Endothelial cell of umbilical vein (primary cell): ENCODE measurements at regions of chr19 and their contacts with region 1.

Region 1: GRCh38 chr19:10259162-10259905 is 7.3 kb downstream of the MRPL4 start:
- DNase-seq: peak; percentile 79
- H3K4me3 ChIP-seq: no peak overlapping the region
- H3K27ac ChIP-seq: no peak overlapping the region
- H3K4me1 ChIP-seq: no peaks in the 10 kb centered on the region
- H3K27me3 ChIP-seq: no peaks in the 10 kb centered on the region
- CTCF ChIP-seq: peak; percentile 63 to 80
- POLR2A ChIP-seq: no peak

Region 2: DNA sequence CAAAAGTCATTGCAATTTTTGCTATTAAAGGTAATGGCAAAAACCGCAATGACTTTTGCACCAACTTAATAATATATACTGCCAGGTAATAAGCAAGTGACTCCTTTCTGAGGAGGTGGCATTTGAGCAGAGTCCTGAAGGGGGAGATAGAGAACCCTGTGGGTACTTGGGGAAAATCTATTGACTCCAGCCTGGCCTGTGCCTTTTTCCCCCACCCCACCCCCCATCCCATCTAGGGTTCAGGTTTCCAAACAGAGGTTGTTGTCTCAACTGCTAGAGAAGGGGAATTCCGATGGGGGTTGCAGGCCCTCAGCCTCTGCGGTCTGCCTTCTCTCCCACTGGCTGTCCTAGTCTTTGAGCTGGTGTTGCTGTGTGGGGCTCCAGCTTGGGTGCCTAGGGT is 39.7 kb before region 1 on chr19:
- CTCF ChIA-PET with region 1: no interaction called
- POLR2A ChIA-PET with region 1: no interaction called
- dilution Hi-C with region 1: no loop called
- intact Hi-C with region 1: no loop called
- DNase-seq: no peak
- H3K4me3 ChIP-seq: no peak overlapping the region
- H3K27ac ChIP-seq: no peak overlapping the region
- H3K4me1 ChIP-seq: no peaks in the 10 kb centered on the region
- H3K27me3 ChIP-seq: no peaks in the 10 kb centered on the region
- CTCF ChIP-seq: peak in 1 of 2 donors; percentile 26
- POLR2A ChIP-seq: no peak

Region 3: GRCh38 chr19:10269333-10270179 is 10.2 kb after region 1 on chr19:
- CTCF ChIA-PET with region 1: interaction called, 127 read pairs
- POLR2A ChIA-PET with region 1: no interaction called
- dilution Hi-C with region 1: no loop called
- intact Hi-C with region 1: loop called (anchors 1 kb)
- DNase-seq: peak; percentile 90
- H3K4me3 ChIP-seq: no peak overlapping the region
- H3K27ac ChIP-seq: peak overlapping the region; percentile 73
- H3K4me1 ChIP-seq: peaks cover 36% of the 10 kb centered on the region
- H3K27me3 ChIP-seq: no peaks in the 10 kb centered on the region
- CTCF ChIP-seq: peak; percentile 88 to 93
- POLR2A ChIP-seq: no peak

Region 4: DNA sequence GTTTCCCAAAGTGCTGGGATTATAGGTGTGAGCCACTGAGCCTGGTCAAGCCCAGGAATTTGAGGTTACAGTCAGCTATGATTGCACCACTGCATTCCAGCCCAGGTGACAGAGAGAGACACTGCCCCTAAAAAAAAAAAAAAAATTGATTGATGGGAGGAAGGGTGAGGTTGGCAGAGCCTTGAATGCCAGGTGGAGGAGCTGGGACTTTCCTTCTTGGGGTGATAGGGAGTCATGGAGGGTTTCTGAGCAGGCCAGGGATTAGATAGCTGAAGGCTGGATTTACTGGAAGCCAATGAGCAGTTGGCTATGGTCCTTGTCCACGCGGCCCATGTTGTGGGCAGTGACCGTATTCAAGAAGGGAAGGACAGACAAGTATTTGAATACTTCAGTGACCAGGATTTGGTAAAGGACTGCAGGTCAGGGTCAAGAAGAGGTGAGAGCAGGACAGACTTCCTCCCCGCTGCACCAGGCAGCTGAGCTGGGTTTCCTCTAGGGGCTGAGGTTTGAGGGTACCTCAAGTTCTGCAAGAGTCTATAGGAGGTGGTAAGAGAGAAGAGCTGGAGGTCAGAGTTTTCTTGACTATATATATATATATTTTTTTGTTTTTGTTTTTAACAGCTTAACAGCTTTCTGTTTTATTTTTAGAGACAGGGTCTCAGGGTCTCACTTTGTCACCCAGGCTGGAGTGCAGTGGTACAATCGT is 20.6 kb after region 1 on chr19:
- CTCF ChIA-PET with region 1: interaction called, 14 read pairs
- POLR2A ChIA-PET with region 1: no interaction called
- dilution Hi-C with region 1: no loop called
- intact Hi-C with region 1: no loop called
- DNase-seq: no peak
- H3K4me3 ChIP-seq: no peak overlapping the region
- H3K27ac ChIP-seq: no peak overlapping the region
- H3K4me1 ChIP-seq: no peaks in the 10 kb centered on the region
- H3K27me3 ChIP-seq: no peaks in the 10 kb centered on the region
- CTCF ChIP-seq: no peak
- POLR2A ChIP-seq: no peak

Region 5: GRCh38 chr19:10332955-10333757 is 73.8 kb after region 1 on chr19 and contains the start of gene RAVER1:
- CTCF ChIA-PET with region 1: interaction called, 23 read pairs
- POLR2A ChIA-PET with region 1: no interaction called
- dilution Hi-C with region 1: no loop called
- intact Hi-C with region 1: loop called (anchors 5 kb)
- DNase-seq: peak; percentile 97
- H3K4me3 ChIP-seq: peak within 1 kb of the TSS; percentile 31 to 71 (median 47)
- H3K27ac ChIP-seq: peak within 1 kb of the TSS; percentile 78
- H3K4me1 ChIP-seq: peaks cover 16% of the 10 kb centered on the region
- H3K27me3 ChIP-seq: no peaks in the 10 kb centered on the region
- CTCF ChIP-seq: no peak
- POLR2A ChIP-seq: peak; percentile 83
- total RNA-seq, gene RAVER1: 47.6 and 55.1 TPM in 2 replicates

Region 6: DNA sequence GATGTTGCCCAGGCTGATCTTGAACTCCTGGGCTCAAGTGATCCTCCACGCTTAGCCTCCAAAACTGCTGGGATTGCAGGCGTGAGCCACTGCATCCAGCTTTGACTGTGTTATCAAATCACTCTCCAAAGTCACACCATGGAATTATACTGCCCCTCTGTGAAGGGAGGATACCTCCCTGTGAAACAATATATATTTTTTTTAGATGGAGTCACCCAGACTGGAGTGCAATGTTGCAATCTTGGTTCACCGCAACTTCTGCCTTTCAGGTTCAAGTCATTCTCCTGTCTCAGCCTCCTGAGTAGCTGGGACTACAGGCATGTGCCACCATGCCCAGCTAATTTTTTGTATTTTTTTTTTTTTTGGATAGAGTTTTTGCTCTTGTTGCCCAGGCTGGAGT is 113.4 kb after region 1 on chr19:
- CTCF ChIA-PET with region 1: interaction called, 10 read pairs
- POLR2A ChIA-PET with region 1: no interaction called
- dilution Hi-C with region 1: no loop called
- intact Hi-C with region 1: no loop called
- DNase-seq: no peak
- H3K4me3 ChIP-seq: no peak overlapping the region
- H3K27ac ChIP-seq: no peak overlapping the region
- H3K4me1 ChIP-seq: no peaks in the 10 kb centered on the region
- H3K27me3 ChIP-seq: no peaks in the 10 kb centered on the region
- CTCF ChIP-seq: no peak
- POLR2A ChIP-seq: no peak

Region 7: DNA sequence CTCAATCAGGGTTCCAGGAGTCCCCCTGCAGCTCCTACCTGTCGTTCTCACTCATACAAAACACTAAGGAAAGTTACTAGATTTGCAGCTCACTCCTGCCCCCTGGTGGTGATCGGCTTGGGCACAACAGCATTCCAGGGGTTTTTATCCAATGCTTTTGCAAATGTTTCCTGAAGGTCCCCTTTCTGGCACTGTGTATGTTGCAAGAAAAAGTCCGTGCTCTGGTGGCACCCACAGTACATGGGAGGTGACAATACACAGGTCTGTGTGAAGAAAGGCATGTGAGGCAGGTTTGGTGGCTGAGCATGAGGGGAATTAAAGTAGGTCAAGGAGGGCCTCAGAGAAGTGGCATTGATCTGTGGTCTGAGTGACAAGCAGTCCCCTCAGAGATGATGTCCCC is 129.6 kb after region 1 on chr19:
- CTCF ChIA-PET with region 1: interaction called, 606 read pairs
- POLR2A ChIA-PET with region 1: interaction called, 13 read pairs
- dilution Hi-C with region 1: no loop called
- intact Hi-C with region 1: loop called (anchors 1 kb)
- DNase-seq: peak; percentile 85
- H3K4me3 ChIP-seq: no peak overlapping the region
- H3K27ac ChIP-seq: no peak overlapping the region
- H3K4me1 ChIP-seq: no peaks in the 10 kb centered on the region
- H3K27me3 ChIP-seq: no peaks in the 10 kb centered on the region
- CTCF ChIP-seq: peak; percentile 88 to 93
- POLR2A ChIP-seq: peak; percentile 43

Region 8: DNA sequence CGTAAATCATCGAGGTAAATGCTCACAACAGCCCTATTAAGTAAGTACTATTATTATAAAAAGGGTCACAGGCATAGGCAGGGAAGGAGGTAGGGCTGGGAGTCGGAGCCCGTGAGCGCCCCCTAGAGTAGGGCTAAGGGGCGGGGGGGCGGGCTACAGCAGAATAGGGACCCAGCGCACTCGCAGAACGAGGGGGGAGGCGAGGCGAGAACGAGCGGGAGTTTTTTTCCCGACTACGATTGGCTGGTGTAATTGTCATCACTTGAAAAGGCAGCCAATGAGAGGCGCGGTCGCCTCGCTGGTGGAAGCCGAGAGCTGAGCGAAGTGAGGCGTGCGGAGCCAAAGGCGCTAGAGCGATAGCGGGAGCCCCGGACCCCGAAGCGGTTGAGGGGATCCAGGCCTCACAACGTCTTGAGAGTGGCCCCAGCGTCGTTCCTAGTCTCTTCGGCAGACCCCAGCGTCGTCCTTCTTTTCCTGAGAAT is 219.6 kb after region 1 on chr19:
- CTCF ChIA-PET with region 1: interaction called, 10 read pairs
- POLR2A ChIA-PET with region 1: no interaction called
- dilution Hi-C with region 1: no loop called
- intact Hi-C with region 1: no loop called
- DNase-seq: peak; percentile 95
- H3K4me3 ChIP-seq: peak overlapping the region in 1 of 3 experiments; percentile 11
- H3K27ac ChIP-seq: no peak overlapping the region
- H3K4me1 ChIP-seq: peaks cover 7% of the 10 kb centered on the region
- H3K27me3 ChIP-seq: no peaks in the 10 kb centered on the region
- CTCF ChIP-seq: peak in 1 of 2 donors; percentile 71
- POLR2A ChIP-seq: no peak